Right cardiac atrium (tissue), 5 donors: ENCODE measurements at regions of chr9 and their contacts with region 1.

Region 1: GRCh38 chr9:95004411-95005277 is 278.1 kb downstream of the AOPEP start:
- DNase-seq: peak; percentile 63 to 86 (median 82)
- ATAC-seq: peak; percentile 47 to 53
- H3K4me3 ChIP-seq: peak overlapping the region; percentile 94
- H3K27ac ChIP-seq: peak overlapping the region; percentile 100
- H3K4me1 ChIP-seq: no peaks in the 10 kb centered on the region
- H3K27me3 ChIP-seq: no peaks in the 10 kb centered on the region

Region 2: DNA sequence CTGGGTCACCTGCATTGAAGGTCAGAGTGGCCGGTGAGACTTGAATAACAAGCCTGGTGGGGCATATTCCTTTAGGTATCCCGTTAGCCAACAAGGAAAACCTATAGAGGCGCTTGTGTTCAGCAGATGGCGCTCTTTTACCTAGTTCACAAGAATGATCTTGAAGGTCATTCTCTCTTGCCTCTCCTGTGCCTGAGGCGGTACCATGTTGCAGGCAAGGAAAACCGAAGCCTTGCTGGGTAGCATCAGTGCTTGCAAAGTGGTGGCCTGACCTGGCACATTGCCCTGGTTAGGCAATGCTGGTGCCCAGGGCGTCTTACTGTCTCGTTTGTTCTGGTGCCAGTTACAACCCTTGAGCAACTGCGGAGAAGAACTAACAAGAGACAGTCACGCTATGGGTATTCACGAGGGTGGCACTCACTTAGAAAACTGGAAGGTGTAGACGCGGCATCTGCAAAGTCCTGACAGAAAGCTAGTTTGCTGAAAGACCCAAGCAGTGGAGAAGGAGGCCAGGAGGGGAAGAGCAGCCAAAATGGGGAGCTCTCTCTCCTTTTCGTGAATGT is 221.5 kb before region 1 on chr9:
- intact Hi-C with region 1: loop called in 2 of 4 experiments (anchors 5 to 10 kb)
- DNase-seq: peak; percentile 72 to 82 (median 78)
- ATAC-seq: peak; percentile 83 to 90
- H3K4me3 ChIP-seq: no peak overlapping the region
- H3K27ac ChIP-seq: peak overlapping the region; percentile 63
- H3K4me1 ChIP-seq: peaks cover 6% of the 10 kb centered on the region
- H3K27me3 ChIP-seq: no peaks in the 10 kb centered on the region

Region 3: GRCh38 chr9:94870793-94871558 is 133.7 kb before region 1 on chr9:
- intact Hi-C with region 1: loop called in 1 of 4 experiments (anchors 5 kb)
- DNase-seq: peak in 2 of 3 donors; percentile 37 to 55
- ATAC-seq: peak; percentile 55
- H3K4me3 ChIP-seq: no peak overlapping the region
- H3K27ac ChIP-seq: peak overlapping the region; percentile 81
- H3K4me1 ChIP-seq: peaks cover 9% of the 10 kb centered on the region
- H3K27me3 ChIP-seq: no peaks in the 10 kb centered on the region

Region 4: GRCh38 chr9:94882966-94883641 is 121.5 kb before region 1 on chr9:
- intact Hi-C with region 1: loop called in 1 of 4 experiments (anchors 5 kb)
- DNase-seq: no peak
- ATAC-seq: no peak
- H3K4me3 ChIP-seq: no peak overlapping the region
- H3K27ac ChIP-seq: no peak overlapping the region
- H3K4me1 ChIP-seq: peaks cover 3% of the 10 kb centered on the region
- H3K27me3 ChIP-seq: no peaks in the 10 kb centered on the region

Region 5: GRCh38 chr9:95055851-95056551 is 51.4 kb after region 1 on chr9:
- intact Hi-C with region 1: loop called in 1 of 4 experiments (anchors 10 kb)
- DNase-seq: peak in 1 of 3 donors; percentile 63
- ATAC-seq: peak; percentile 60 to 73
- H3K4me3 ChIP-seq: peak overlapping the region; percentile 36
- H3K27ac ChIP-seq: peak overlapping the region; percentile 83
- H3K4me1 ChIP-seq: peaks cover 23% of the 10 kb centered on the region
- H3K27me3 ChIP-seq: no peaks in the 10 kb centered on the region